ENCODE measurements at regions of chr5 and their contacts with region 1.

Region 1: DNA sequence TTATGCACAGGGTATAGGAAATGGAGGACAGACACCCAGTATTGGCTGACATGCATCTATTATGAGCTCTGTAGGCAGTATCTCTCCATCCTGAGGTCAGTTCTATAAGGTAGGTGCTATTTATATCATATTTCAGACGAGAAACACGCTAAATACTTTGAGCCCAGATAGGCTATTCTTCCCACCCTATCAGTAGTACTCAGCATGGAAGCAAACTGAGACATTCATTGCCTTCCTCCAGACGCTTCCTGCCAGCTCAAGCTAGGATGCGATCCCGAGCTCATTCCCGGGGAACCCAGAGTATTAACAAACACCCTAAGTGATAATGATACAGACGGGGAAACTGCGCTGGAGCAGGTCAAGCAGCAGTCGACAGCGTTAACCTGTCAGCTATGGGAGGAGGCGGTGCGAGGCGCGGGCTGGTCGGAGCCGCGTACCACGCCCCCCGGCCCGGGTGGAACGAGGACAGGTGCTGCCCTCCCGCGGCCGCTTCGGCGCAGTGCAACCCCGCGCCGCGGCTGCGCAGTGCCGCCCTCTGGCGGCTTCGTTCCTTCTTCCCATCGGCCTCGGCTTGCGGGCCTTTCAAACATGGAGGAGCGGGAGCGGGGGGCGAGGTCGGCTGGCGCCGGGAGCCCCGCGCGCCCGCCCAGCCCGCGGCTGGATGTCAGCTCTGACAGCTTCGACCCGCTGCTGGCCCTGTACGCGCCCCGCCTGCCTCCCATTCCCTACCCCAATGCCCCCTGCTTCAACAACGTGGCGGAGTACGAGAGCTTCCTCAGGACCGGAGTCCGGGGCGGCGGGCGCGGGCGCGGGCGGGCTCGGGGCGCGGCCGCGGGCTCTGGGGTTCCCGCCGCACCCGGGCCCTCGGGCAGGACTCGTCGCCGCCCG is at the start of gene LSM11:
- DNase-seq: peak; percentile 94
- CTCF ChIP-seq: peak; percentile 100

Region 2: GRCh38 chr5:157253547-157253946 is 489.9 kb before region 1 on chr5:
- CTCF ChIA-PET with region 1: interaction called, 12 read pairs
- POLR2A ChIA-PET with region 1: no interaction called
- DNase-seq: peak; percentile 59
- CTCF ChIP-seq: peak; percentile 94

Region 3: DNA sequence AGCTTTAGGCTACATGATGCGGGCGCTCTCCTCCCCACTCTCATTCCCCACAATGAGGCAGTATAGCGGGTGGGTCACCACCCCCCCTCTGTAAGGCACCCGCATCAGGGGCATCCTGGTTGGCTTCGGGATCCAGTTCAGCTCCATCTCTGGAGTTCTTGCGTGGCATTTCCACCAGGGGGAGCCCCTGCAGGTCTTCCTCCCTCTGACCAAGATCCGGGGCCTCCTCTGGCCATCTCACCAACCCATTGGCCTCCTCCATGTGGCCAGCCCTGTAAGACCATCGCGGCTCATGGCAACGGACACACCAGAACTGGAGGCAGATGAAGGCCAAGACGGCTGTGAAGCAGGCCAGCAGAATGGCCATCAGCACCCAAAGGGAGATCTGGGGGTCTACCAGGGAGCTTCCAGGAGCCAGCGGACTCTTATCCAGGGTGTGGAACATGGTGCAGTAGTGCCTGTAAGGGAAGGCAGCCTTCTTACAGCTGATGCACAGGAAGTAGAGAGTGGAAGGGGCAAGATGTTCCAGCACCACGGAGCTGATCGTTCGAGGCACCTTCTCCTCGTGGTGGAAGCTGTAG is 400.5 kb before region 1 on chr5:
- CTCF ChIA-PET with region 1: interaction called, 16 read pairs
- POLR2A ChIA-PET with region 1: no interaction called
- DNase-seq: peak; percentile 53
- CTCF ChIP-seq: peak; percentile 59

Region 4: GRCh38 chr5:157431544-157432200 is 311.7 kb before region 1 on chr5:
- CTCF ChIA-PET with region 1: interaction called, 30 read pairs
- POLR2A ChIA-PET with region 1: no interaction called
- DNase-seq: peak; percentile 56
- CTCF ChIP-seq: peak; percentile 45

Region 5: GRCh38 chr5:157582731-157583620 is 160.4 kb before region 1 on chr5:
- CTCF ChIA-PET with region 1: interaction called, 18 read pairs
- POLR2A ChIA-PET with region 1: interaction called, 4 read pairs
- DNase-seq: no peak
- CTCF ChIP-seq: peak; percentile 12

Region 6: GRCh38 chr5:157681048-157681447 is 62.4 kb before region 1 on chr5:
- CTCF ChIA-PET with region 1: interaction called, 10 read pairs
- POLR2A ChIA-PET with region 1: no interaction called
- DNase-seq: no peak
- CTCF ChIP-seq: no peak

Region 7: GRCh38 chr5:157756122-157756521 is 12.7 kb after region 1 on chr5:
- CTCF ChIA-PET with region 1: interaction called, 42 read pairs
- POLR2A ChIA-PET with region 1: no interaction called
- DNase-seq: no peak
- CTCF ChIP-seq: no peak

Region 8: DNA sequence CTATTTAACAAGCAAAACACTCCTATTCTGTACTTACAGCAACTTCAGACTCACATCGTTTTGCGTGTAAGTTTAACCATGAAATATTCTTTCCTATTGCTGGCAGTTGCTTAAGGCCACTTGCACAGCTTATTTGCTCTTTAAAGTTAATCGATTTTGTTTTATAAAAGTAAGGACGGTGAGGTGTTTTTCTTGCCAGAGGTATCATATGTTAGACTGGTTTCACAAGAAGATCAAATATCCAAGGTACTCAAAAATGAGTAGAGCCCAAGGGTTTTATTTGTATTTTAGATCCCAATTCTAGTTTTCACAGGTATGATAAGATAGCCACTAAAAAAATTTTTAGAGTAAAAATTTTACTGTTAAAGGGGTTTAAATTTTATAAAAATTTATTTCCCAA is 99.4 kb after region 1 on chr5:
- CTCF ChIA-PET with region 1: no interaction called
- POLR2A ChIA-PET with region 1: no interaction called
- DNase-seq: no peak
- CTCF ChIP-seq: no peak